Panc1 (cell line): ENCODE measurements at regions of chr6 and their contacts with region 1.

Region 1: DNA sequence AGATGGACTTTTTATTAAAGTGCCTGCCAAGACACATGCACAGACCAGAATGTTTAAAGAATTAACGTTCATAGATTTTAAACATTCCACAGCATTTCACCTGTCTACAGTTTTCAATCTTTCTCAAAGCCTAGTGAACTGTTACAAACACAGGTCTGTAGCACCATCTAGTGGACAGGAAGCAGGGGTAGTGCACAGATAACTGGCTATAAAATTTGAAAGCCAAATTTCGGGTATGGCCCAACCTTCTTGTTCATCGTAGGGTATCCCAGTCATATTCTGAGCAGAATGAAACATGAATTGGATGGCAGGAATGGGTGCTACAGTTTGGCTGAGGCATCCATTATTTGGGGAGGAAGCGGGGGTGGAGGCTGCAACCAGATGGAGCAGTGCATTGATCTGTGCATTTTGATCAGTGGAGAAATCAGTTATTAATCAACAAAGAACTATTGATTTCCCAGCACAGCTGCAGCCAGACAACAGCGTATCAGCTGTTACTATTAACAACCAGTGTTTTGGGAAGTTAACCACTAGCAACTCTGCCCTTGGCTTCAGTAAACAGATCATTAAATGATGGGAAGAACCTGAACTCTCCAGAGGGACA is 56.1 kb upstream of the B3GAT2 start:
- DNase-seq: peak; percentile 27
- ATAC-seq: peak; percentile 95
- H3K4me3 ChIP-seq: no peak overlapping the region
- H3K27ac ChIP-seq: no peak overlapping the region
- H3K4me1 ChIP-seq: no peaks in the 10 kb centered on the region
- H3K27me3 ChIP-seq: no peaks in the 10 kb centered on the region
- CTCF ChIP-seq: peak; percentile 84

Region 2: GRCh38 chr6:70221025-70221714 is 791.8 kb before region 1 on chr6:
- CTCF ChIA-PET with region 1: interaction called, 4 read pairs
- POLR2A ChIA-PET with region 1: no interaction called
- in situ Hi-C with region 1: no loop called
- intact Hi-C with region 1: loop called (anchors 5 kb)
- DNase-seq: peak; percentile 13
- ATAC-seq: no peak
- H3K4me3 ChIP-seq: no peak overlapping the region
- H3K27ac ChIP-seq: no peak overlapping the region
- H3K4me1 ChIP-seq: no peaks in the 10 kb centered on the region
- H3K27me3 ChIP-seq: peaks cover 23% of the 10 kb centered on the region
- CTCF ChIP-seq: peak; percentile 77; the same call in 1 of the 2 replicates

Region 3: DNA sequence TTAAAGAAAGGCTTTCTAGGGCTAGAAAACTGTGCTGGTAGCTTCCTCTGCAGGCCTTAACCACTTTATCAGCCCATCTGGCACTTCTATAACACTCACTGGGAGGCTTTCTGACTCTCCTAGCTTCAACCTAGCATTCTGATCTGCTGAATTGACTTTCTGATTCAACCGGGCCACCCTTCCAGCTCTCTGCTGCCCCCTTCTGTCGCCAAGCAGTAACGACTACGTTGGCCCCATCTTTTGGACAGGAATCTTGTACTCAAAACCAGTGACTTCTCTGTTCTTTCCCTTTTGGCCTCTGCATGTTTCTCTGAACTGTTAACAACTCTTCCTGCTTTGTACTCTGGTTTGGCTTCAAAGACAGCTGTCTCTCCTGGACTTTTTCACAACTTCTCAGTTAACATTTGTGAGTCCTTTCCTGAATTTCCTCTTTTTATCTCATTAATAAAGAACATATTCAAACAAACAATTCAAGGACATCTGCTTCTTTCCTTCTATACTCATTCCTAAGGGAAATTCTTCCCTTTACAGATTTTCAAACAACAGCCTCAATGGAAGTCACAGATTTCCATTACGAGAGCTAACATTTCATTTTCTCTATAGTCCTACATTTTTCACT is 643.5 kb before region 1 on chr6:
- CTCF ChIA-PET with region 1: no interaction called
- POLR2A ChIA-PET with region 1: no interaction called
- in situ Hi-C with region 1: no loop called
- intact Hi-C with region 1: loop called (anchors 2 kb)
- DNase-seq: peak; percentile 67
- ATAC-seq: peak; percentile 93
- H3K4me3 ChIP-seq: no peak overlapping the region
- H3K27ac ChIP-seq: no peak overlapping the region
- H3K4me1 ChIP-seq: no peaks in the 10 kb centered on the region
- H3K27me3 ChIP-seq: peaks cover 14% of the 10 kb centered on the region; the same call in 1 of the 2 replicates
- CTCF ChIP-seq: peak; percentile 98

Region 4: DNA sequence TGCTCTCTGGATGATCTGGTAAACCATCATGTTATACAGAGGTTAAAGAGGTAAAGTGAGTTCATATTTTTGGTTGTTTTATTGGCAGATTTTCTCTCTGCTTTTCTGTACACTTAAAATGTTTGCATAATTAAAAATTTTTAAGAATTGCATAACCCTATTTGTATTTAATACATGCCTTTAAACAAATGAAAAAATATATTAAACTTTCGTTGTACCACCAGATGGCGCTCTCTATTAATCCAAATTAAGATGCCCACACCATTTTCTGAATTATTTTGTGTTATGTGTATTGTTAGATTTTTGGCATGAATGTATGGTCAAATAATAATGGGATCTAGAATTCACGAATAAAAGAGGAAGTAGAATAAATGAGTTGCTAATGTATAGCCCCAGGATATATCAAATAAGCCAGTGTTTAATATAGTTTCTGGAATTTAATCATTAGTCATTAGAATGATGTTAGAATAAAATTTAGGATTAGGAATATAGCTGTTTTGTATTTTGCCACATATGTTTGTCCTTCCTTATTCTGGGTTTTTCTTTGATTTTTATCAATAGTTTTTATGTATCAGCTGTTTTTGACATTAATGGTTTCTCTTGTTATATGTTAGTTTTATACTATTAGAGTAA is 306.4 kb before region 1 on chr6:
- CTCF ChIA-PET with region 1: no interaction called
- POLR2A ChIA-PET with region 1: no interaction called
- in situ Hi-C with region 1: no loop called
- intact Hi-C with region 1: loop called (anchors 5 kb)
- DNase-seq: peak; percentile 20
- ATAC-seq: no peak
- H3K4me3 ChIP-seq: no peak overlapping the region
- H3K27ac ChIP-seq: no peak overlapping the region
- H3K4me1 ChIP-seq: no peaks in the 10 kb centered on the region
- H3K27me3 ChIP-seq: no peaks in the 10 kb centered on the region
- CTCF ChIP-seq: peak; percentile 68; the same call in 1 of the 2 replicates

Region 5: GRCh38 chr6:71082033-71082641 is 69.2 kb after region 1 on chr6:
- CTCF ChIA-PET with region 1: no interaction called
- POLR2A ChIA-PET with region 1: no interaction called
- in situ Hi-C with region 1: no loop called
- intact Hi-C with region 1: no loop called
- DNase-seq: no peak
- ATAC-seq: no peak
- H3K4me3 ChIP-seq: peak overlapping the region; percentile 2 to 3; a peak in 2 of 4 replicates
- H3K27ac ChIP-seq: no peak overlapping the region
- H3K4me1 ChIP-seq: no peaks in the 10 kb centered on the region
- H3K27me3 ChIP-seq: no peaks in the 10 kb centered on the region
- CTCF ChIP-seq: no peak

Region 6: GRCh38 chr6:71349395-71349794 is 336.4 kb after region 1 on chr6:
- CTCF ChIA-PET with region 1: no interaction called
- POLR2A ChIA-PET with region 1: no interaction called
- in situ Hi-C with region 1: no loop called
- intact Hi-C with region 1: loop called (anchors 10 kb)
- DNase-seq: no peak
- ATAC-seq: no peak
- H3K4me3 ChIP-seq: no peak overlapping the region
- H3K27ac ChIP-seq: no peak overlapping the region
- H3K4me1 ChIP-seq: no peaks in the 10 kb centered on the region
- H3K27me3 ChIP-seq: no peaks in the 10 kb centered on the region
- CTCF ChIP-seq: peak; percentile 73; the same call in 1 of the 2 replicates